MCF 10A (cell line): ENCODE measurements at regions of chr7 and their contacts with region 1.

Region 1: GRCh38 chr7:151665368-151665767 is 145.7 kb upstream of the RHEB start:
- DNase-seq: peak; percentile 67
- H3K4me3 Mint-ChIP-seq: no peak overlapping the region
- H3K27ac Mint-ChIP-seq: peak overlapping the region; percentile 59
- H3K4me1 Mint-ChIP-seq: peaks cover 12% of the 10 kb centered on the region
- H3K27me3 Mint-ChIP-seq: no peaks in the 10 kb centered on the region
- CTCF ChIP-seq: no peak

Region 2: GRCh38 chr7:151566897-151567320 is 98.5 kb before region 1 on chr7:
- CTCF ChIA-PET with region 1: no interaction called
- POLR2A ChIA-PET with region 1: no interaction called
- intact Hi-C with region 1: no loop called
- DNase-seq: peak; percentile 28
- H3K4me3 Mint-ChIP-seq: no peak overlapping the region
- H3K27ac Mint-ChIP-seq: no peak overlapping the region
- H3K4me1 Mint-ChIP-seq: peaks cover 4% of the 10 kb centered on the region
- H3K27me3 Mint-ChIP-seq: no peaks in the 10 kb centered on the region
- CTCF ChIP-seq: no peak

Region 3: DNA sequence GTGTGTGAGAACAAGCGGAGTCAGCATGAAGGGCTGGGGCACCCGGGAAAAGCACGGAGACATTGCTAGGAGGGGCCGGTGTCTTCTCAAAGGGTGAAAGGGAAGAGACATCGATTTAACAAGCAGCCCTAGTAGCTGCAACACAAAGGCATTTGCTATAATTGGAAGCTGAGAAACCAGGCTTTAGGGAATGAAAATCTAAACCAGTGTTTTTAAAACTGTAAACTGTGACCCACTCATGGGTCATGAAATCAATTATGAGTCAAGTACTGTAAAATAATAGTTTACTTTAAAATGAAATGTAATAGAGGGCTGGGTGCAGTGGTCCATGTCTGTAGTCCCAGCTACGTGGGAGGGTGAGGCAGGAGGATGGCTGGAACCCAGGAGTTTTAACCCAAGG is 16.9 kb before region 1 on chr7:
- CTCF ChIA-PET with region 1: interaction called, 5 read pairs
- POLR2A ChIA-PET with region 1: interaction called, 27 read pairs
- intact Hi-C with region 1: no loop called
- DNase-seq: no peak
- H3K4me3 Mint-ChIP-seq: no peak overlapping the region
- H3K27ac Mint-ChIP-seq: no peak overlapping the region
- H3K4me1 Mint-ChIP-seq: peaks cover 29% of the 10 kb centered on the region
- H3K27me3 Mint-ChIP-seq: no peaks in the 10 kb centered on the region
- CTCF ChIP-seq: no peak